Ascending aorta (tissue), 2 donors: ENCODE measurements at regions of chr2 and their contacts with region 1.

Region 1: GRCh38 chr2:218367415-218368153 is 10.9 kb downstream of the CATIP start:
- DNase-seq: peak; percentile 77 to 94
- H3K4me3 ChIP-seq: peak overlapping the region; percentile 53 to 64
- H3K27ac ChIP-seq: peak overlapping the region; percentile 79 to 95
- H3K4me1 ChIP-seq: peaks cover 0 to 16% of the 10 kb centered on the region in 2 donors
- H3K27me3 ChIP-seq: no peaks in the 10 kb centered on the region
- CTCF ChIP-seq: no peak

Region 2: GRCh38 chr2:218194880-218195279 is 172.7 kb before region 1 on chr2:
- intact Hi-C with region 1: no loop called
- DNase-seq: no peak
- H3K4me3 ChIP-seq: no peak overlapping the region
- H3K27ac ChIP-seq: no peak overlapping the region
- H3K4me1 ChIP-seq: no peaks in the 10 kb centered on the region
- H3K27me3 ChIP-seq: no peaks in the 10 kb centered on the region
- CTCF ChIP-seq: no peak

Region 3: DNA sequence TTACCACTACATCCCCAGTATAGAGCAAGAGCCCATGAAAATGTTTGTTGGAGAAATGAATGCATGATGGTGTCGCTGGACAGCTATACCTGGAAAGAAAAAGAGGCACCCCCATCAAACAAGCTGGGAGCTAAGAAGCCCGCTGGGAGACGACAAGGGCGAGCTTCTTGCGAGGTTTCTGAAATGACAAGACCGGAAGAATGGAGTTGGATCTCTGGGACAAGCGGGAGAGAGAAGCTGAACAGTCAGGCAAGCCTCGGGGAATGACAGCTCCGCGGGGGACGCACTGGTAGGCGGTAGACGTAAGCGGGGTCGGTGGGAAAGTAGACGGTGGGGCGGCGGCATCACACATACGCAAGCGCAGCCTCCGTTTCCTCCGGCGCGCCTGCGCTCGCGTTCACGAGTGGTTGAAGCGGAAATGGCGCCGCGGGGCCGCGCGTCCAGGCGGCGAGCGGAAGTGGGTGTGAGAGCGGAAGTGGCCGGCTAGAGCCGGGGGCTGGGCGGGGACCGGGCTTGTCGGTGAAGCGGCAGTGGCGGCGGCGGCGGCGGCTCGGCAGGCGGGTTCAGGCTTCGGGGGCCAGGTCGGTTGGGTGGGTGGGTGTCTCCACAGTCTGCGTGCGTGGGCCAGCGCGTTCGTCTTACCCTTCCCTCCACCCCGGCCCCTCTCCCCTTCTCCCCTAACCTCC is 150.8 kb before region 1 on chr2 and contains the start of gene ARPC2:
- intact Hi-C with region 1: loop called (anchors 5 kb)
- DNase-seq: peak; percentile 75 to 97
- H3K4me3 ChIP-seq: peak within 1 kb of the TSS; percentile 96
- H3K27ac ChIP-seq: peak within 1 kb of the TSS; percentile 97 to 98
- H3K4me1 ChIP-seq: peaks cover 19 to 35% of the 10 kb centered on the region in 2 donors
- H3K27me3 ChIP-seq: no peaks in the 10 kb centered on the region
- CTCF ChIP-seq: peak in 1 of 3 experiments; percentile 22
- total RNA-seq, gene ARPC2: 237 TPM

Region 4: DNA sequence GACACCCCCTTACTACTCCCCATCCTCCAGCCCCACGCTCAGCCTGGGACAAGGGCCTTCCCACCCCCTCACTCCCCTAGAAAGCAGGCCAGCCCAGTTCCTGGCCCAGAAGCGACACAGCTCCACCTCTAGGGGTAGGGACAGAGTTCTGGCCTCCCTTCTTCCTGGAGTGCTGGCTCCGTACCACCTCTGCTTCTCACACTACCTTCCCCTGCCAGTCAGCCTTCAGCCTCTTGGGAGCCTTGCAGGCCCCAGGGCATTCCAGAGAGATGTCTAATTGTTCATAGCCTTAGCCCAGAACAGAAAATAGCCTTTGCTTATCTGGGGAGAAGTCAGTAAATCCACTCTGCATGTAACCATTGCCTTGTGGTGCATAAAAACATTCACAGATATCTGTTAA is 24.0 kb before region 1 on chr2:
- intact Hi-C with region 1: loop called (anchors 2 kb)
- DNase-seq: peak in 1 of 2 donors; percentile 90
- H3K4me3 ChIP-seq: no peak overlapping the region
- H3K27ac ChIP-seq: peak overlapping the region; percentile 86 to 96
- H3K4me1 ChIP-seq: peaks cover 17 to 33% of the 10 kb centered on the region in 2 donors
- H3K27me3 ChIP-seq: no peaks in the 10 kb centered on the region
- CTCF ChIP-seq: peak in 1 of 3 experiments; percentile 22